ENCODE measurements at regions of chrX and their contacts with region 1.

Region 1: DNA sequence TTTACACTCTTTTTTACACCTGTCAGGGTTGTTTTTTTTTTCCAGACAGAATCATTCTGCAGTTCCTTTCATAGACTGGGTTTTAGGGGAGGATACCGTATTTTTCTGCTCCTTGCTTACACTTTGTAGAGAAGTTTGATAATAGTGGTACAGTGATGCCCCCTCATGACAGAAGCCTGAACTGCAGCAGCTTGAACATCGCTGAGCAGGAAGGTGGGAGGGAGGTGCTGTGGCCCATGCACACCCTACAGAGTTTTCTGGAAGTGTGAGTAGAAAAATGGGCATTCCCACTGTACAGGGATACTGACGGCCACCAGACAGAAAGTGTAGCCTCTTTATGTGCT is 54.5 kb downstream of the RAB40A start:
- DNase-seq: peak; percentile 87
- H3K4me3 Mint-ChIP-seq: peak overlapping the region; percentile 82
- H3K27ac Mint-ChIP-seq: peak overlapping the region; percentile 73
- H3K4me1 Mint-ChIP-seq: peaks cover 25% of the 10 kb centered on the region
- H3K27me3 Mint-ChIP-seq: no peaks in the 10 kb centered on the region

Region 2: GRCh38 chrX:102950908-102951866 is 513.6 kb before region 1 on chrX:
- CTCF ChIA-PET with region 1: interaction called, 4 read pairs
- intact Hi-C with region 1: loop called (anchors 1 kb)
- DNase-seq: peak; percentile 70
- H3K4me3 Mint-ChIP-seq: peak overlapping the region; percentile 57
- H3K27ac Mint-ChIP-seq: no peak overlapping the region
- H3K4me1 Mint-ChIP-seq: no peaks in the 10 kb centered on the region
- H3K27me3 Mint-ChIP-seq: no peaks in the 10 kb centered on the region

Region 3: GRCh38 chrX:103214870-103215424 is 249.8 kb before region 1 on chrX and contains the start of gene BEX4:
- CTCF ChIA-PET with region 1: interaction called, 24 read pairs
- intact Hi-C with region 1: loop called (anchors 1 kb)
- DNase-seq: peak; percentile 87
- H3K4me3 Mint-ChIP-seq: peak within 1 kb of the TSS; percentile 82
- H3K27ac Mint-ChIP-seq: peak within 1 kb of the TSS; percentile 50
- H3K4me1 Mint-ChIP-seq: peaks cover 15% of the 10 kb centered on the region
- H3K27me3 Mint-ChIP-seq: no peaks in the 10 kb centered on the region
- total RNA-seq, gene BEX4: 8.8 to 9.8 TPM

Region 4: GRCh38 chrX:103343105-103343504 is 121.6 kb before region 1 on chrX:
- CTCF ChIA-PET with region 1: interaction called, 8 read pairs
- intact Hi-C with region 1: loop called (anchors 1 kb)
- DNase-seq: peak; percentile 65
- H3K4me3 Mint-ChIP-seq: no peak overlapping the region
- H3K27ac Mint-ChIP-seq: no peak overlapping the region
- H3K4me1 Mint-ChIP-seq: peaks cover 4% of the 10 kb centered on the region
- H3K27me3 Mint-ChIP-seq: peaks cover 2% of the 10 kb centered on the region

Region 5: GRCh38 chrX:103404231-103405208 is 60.2 kb before region 1 on chrX:
- CTCF ChIA-PET with region 1: interaction called, 4 read pairs
- intact Hi-C with region 1: loop called (anchors 2 kb)
- DNase-seq: peak; percentile 69
- H3K4me3 Mint-ChIP-seq: peak overlapping the region; percentile 78
- H3K27ac Mint-ChIP-seq: no peak overlapping the region
- H3K4me1 Mint-ChIP-seq: peaks cover 3% of the 10 kb centered on the region
- H3K27me3 Mint-ChIP-seq: no peaks in the 10 kb centered on the region

Region 6: GRCh38 chrX:103697687-103698086 is 232.9 kb after region 1 on chrX:
- CTCF ChIA-PET with region 1: no interaction called
- intact Hi-C with region 1: no loop called
- DNase-seq: no peak
- H3K4me3 Mint-ChIP-seq: no peak overlapping the region
- H3K27ac Mint-ChIP-seq: no peak overlapping the region
- H3K4me1 Mint-ChIP-seq: no peaks in the 10 kb centered on the region
- H3K27me3 Mint-ChIP-seq: no peaks in the 10 kb centered on the region